ENCODE measurements at regions of chr17 and their contacts with region 1.

Region 1: GRCh38 chr17:59220376-59221158 is at the start of gene GDPD1:
- DNase-seq: peak; percentile 95
- ATAC-seq: peak; percentile 99
- H3K4me3 Mint-ChIP-seq: peak within 1 kb of the TSS; percentile 94
- H3K27ac Mint-ChIP-seq: peak within 1 kb of the TSS; percentile 85
- H3K4me1 Mint-ChIP-seq: peaks cover 13% of the 10 kb centered on the region
- H3K27me3 Mint-ChIP-seq: no peaks in the 10 kb centered on the region
- CTCF ChIP-seq: no peak
- total RNA-seq, gene GDPD1: 0.71 and 1.2 TPM in 2 replicates

Region 2: DNA sequence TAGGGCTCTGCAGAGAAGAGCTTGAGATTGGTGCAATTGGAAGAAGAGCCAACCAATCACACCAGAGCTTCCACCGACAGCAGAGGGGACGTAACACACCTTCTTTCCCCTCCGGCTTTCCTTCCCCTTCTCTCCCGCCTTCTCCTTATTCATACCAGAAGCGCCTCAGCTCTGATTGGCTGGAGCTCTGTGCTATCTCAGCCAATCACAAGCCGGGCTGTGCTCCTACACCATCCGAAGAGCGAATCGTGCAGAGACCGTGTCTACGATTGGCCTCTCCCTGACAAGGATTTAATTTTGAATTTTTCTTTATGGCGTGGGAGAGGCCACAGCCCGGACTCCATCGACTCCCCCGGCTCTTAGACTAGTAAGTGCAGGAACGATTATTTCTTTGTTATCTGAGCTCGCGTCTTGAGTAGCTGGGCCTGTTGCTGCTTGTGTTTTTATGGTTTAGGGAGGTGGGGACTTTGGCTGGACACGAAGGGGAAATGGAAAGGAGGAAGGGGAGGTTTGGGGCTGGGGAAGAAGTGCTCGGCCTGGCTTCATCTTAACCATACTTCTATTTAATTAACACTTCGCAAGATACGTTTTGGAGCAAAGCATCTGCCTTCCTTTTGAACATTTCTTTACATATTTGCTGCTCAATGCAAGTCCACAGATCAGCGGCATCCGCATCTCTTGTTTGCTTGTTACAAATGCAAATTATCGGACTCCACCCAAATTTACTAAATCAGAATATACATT is 65.0 kb before region 1 on chr17 and contains the start of gene PRR11:
- CTCF ChIA-PET with region 1: no interaction called
- POLR2A ChIA-PET with region 1: interaction called, 7 read pairs
- intact Hi-C with region 1: loop called (anchors 2 kb)
- DNase-seq: peak; percentile 65
- ATAC-seq: peak; percentile 88
- H3K4me3 Mint-ChIP-seq: no peak within 1 kb of the TSS
- H3K27ac Mint-ChIP-seq: no peak within 1 kb of the TSS
- H3K4me1 Mint-ChIP-seq: peaks cover 16% of the 10 kb centered on the region
- H3K27me3 Mint-ChIP-seq: no peaks in the 10 kb centered on the region
- CTCF ChIP-seq: no peak
- total RNA-seq, gene PRR11: 2.4 and 4.8 TPM in 2 replicates

Region 3: DNA sequence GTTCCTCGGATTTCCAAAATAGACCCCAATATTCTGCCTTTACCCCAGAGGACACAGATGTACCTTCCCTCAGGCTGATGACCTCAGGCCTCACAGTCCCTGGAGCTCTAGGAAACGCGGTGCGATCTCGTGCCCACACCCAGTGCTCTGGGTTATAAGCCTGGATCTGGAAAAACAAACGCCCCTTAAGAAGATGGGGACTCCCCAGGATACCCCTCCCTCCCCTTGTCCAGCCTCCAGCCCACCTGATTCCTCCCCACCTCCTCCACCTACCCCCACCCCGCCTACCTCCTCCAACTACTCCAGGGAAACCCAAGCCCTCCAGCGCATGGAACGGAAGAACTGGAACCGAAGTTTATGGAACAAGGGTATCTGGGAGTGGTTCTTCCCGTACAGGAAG is 45.9 kb before region 1 on chr17:
- CTCF ChIA-PET with region 1: no interaction called
- POLR2A ChIA-PET with region 1: no interaction called
- intact Hi-C with region 1: no loop called
- DNase-seq: no peak
- ATAC-seq: no peak
- H3K4me3 Mint-ChIP-seq: no peak overlapping the region
- H3K27ac Mint-ChIP-seq: no peak overlapping the region
- H3K4me1 Mint-ChIP-seq: peaks cover 3% of the 10 kb centered on the region
- H3K27me3 Mint-ChIP-seq: no peaks in the 10 kb centered on the region
- CTCF ChIP-seq: no peak

Region 4: GRCh38 chr17:59277031-59277430 is 56.5 kb after region 1 on chr17:
- CTCF ChIA-PET with region 1: no interaction called
- POLR2A ChIA-PET with region 1: no interaction called
- intact Hi-C with region 1: loop called (anchors 2 kb)
- DNase-seq: no peak
- ATAC-seq: peak; percentile 83
- H3K4me3 Mint-ChIP-seq: peak overlapping the region; percentile 60
- H3K27ac Mint-ChIP-seq: peak overlapping the region; percentile 89
- H3K4me1 Mint-ChIP-seq: peaks cover 18% of the 10 kb centered on the region
- H3K27me3 Mint-ChIP-seq: no peaks in the 10 kb centered on the region
- CTCF ChIP-seq: no peak

Region 5: GRCh38 chr17:59440784-59441441 is 220.3 kb after region 1 on chr17:
- CTCF ChIA-PET with region 1: no interaction called
- POLR2A ChIA-PET with region 1: no interaction called
- intact Hi-C with region 1: loop called (anchors 1 kb)
- DNase-seq: peak; percentile 56
- ATAC-seq: peak; percentile 91
- H3K4me3 Mint-ChIP-seq: no peak overlapping the region
- H3K27ac Mint-ChIP-seq: no peak overlapping the region
- H3K4me1 Mint-ChIP-seq: peaks cover 48% of the 10 kb centered on the region
- H3K27me3 Mint-ChIP-seq: peaks cover 4% of the 10 kb centered on the region
- CTCF ChIP-seq: peak; percentile 45